ENCODE measurements at regions of chr1 and their contacts with region 1.

Region 1: DNA sequence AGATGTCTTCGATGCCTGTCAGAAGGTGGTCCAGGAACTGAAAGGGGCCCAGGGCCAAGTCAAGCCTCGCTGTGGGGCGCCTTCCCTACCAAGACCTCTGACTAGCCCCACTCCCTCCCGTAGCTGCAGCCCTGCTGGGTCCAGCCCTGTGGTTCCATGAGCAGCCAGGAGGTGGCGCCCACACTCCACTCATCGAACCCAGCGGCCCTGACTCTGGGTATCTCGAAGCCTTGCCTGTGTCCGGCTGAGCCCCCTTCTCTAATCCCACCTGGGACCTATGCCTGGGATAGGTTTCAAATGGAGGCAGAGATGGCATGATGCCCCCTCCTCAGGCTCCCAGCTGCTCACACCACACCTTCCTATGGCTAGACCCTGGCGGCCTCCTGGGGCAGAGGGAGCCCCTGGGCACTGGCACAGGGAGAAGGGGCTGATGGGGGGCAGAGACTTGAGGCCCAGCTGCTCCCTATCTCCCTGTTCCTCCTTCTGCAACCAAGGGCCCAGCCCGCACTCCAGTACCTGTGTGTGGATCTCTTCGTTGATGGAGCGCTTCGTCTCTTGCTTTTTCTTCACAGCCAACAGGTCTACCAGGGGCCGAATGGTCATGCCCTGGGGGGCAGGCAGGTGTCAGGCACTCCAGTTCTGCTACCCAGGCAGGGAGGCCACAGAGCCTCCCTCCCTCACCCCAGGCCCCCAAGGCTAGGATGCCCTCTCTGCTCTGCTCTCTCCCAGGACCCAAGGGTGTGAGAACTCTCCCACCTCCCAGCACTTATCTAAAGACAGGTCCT is 52.0 kb downstream of the SLC9A1 start:
- DNase-seq: peak; percentile 72 to 82 (median 77)
- ATAC-seq: peak; percentile 80 to 91 (median 85)
- H3K4me3 ChIP-seq: no peak overlapping the region
- H3K27ac ChIP-seq: no peak overlapping the region
- H3K4me1 ChIP-seq: peaks cover 0 to 6% (median 0%) of the 10 kb centered on the region in 4 donors
- H3K27me3 ChIP-seq: no peaks in the 10 kb centered on the region
- CTCF ChIP-seq: peak; percentile 96 to 97 (median 96)
- POLR2A ChIP-seq: no peak

Region 2: DNA sequence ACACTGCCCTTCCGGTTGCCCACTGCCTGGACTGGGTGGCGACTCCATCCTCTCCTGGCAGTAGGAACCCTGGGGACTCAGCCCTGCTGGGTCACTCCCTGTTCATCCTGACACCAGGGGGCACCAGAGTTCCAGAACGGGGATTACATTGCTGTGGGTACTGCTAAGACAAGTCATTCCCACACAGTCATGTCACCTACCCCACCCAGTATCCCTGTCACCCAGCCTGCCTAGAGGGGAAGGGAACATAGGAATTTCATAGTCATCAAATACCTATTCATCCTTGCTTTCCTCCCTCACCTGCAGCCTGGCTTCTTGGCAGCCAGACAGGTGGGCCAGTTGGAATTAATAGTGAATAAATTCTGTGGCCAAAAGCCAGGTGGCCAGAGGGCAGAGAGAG is 249.7 kb before region 1 on chr1:
- intact Hi-C with region 1: no loop called
- DNase-seq: peak; percentile 84 to 90 (median 86)
- ATAC-seq: peak; percentile 69 to 90 (median 87)
- H3K4me3 ChIP-seq: no peak overlapping the region
- H3K27ac ChIP-seq: no peak overlapping the region
- H3K4me1 ChIP-seq: peaks cover 0 to 14% (median 0%) of the 10 kb centered on the region in 4 donors
- H3K27me3 ChIP-seq: no peaks in the 10 kb centered on the region
- CTCF ChIP-seq: peak; percentile 81 to 90 (median 86)
- POLR2A ChIP-seq: no peak

Region 3: DNA sequence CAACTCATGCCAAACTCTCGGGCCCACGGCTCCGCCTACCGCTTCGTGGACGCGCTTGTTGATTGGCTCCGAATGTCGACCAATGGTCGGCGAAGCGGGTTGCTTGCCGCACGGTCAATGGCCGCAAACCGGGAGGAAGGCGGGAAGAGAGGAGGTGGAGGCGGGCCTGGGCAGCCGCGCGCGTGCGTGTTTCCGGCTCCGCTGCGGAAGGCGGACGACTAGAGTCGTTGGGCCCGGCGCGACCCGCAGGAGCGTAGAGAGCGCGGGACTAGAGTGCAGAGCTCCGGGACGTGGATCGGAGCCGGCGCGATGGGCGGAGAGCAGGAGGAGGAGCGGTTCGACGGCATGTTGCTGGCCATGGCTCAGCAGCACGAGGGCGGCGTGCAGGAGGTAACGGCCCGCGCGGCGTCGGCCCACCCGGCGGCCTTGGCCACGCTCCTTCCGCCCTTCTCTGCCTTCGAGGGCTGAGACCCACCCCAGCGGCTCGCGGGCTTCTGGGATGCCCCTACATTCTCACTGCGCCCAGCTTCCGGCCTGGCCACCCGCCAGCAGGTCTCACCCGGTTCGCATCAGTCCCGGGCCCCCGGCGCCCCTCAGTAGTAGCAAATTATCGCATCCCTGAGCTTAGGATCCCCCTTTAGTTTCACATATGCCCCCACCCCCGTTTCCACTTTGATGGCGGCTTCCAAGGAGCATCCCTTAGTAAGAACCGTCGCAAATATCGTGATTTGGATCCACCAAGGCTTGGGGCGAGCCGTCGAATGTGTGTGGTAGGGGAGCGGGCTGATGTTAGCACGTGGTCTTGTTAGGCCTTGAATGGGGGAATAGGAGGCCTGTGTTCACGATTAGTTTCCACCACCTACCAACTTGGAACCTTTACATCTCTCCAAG is 181.1 kb before region 1 on chr1 and contains the start of gene NUDC:
- intact Hi-C with region 1: no loop called
- DNase-seq: peak; percentile 98 to 99 (median 99)
- ATAC-seq: peak; percentile 96 to 99 (median 98)
- H3K4me3 ChIP-seq: peak within 1 kb of the TSS; percentile 87 to 99 (median 94)
- H3K27ac ChIP-seq: peak within 1 kb of the TSS; percentile 94
- H3K4me1 ChIP-seq: peaks cover 0 to 22% (median 5%) of the 10 kb centered on the region in 4 donors
- H3K27me3 ChIP-seq: no peaks in the 10 kb centered on the region
- CTCF ChIP-seq: no peak
- POLR2A ChIP-seq: peak; percentile 92
- total RNA-seq, gene NUDC: 40.9 to 60.8 (median 48.4) TPM

Region 4: GRCh38 chr1:27154991-27155781 is 52.3 kb after region 1 on chr1 and contains the start of gene SLC9A1:
- intact Hi-C with region 1: loop called in 1 of 2 experiments (anchors 10 kb)
- DNase-seq: peak; percentile 95
- ATAC-seq: peak; percentile 95 to 98 (median 96)
- H3K4me3 ChIP-seq: peak within 1 kb of the TSS; percentile 63 to 80 (median 72)
- H3K27ac ChIP-seq: peak within 1 kb of the TSS; percentile 56 to 83 (median 82)
- H3K4me1 ChIP-seq: peaks cover 0 to 28% (median 2%) of the 10 kb centered on the region in 4 donors
- H3K27me3 ChIP-seq: no peaks in the 10 kb centered on the region
- CTCF ChIP-seq: peak; percentile 58 to 89 (median 84)
- POLR2A ChIP-seq: peak; percentile 99
- total RNA-seq, gene SLC9A1: 1.7 to 4.3 (median 3.0) TPM

Region 5: GRCh38 chr1:27166351-27166802 is 63.5 kb after region 1 on chr1:
- intact Hi-C with region 1: no loop called
- DNase-seq: no peak
- ATAC-seq: no peak
- H3K4me3 ChIP-seq: no peak overlapping the region
- H3K27ac ChIP-seq: no peak overlapping the region
- H3K4me1 ChIP-seq: no peaks in the 10 kb centered on the region
- H3K27me3 ChIP-seq: no peaks in the 10 kb centered on the region
- CTCF ChIP-seq: no peak
- POLR2A ChIP-seq: no peak

Region 6: GRCh38 chr1:27192039-27192529 is 89.2 kb after region 1 on chr1:
- intact Hi-C with region 1: loop called in 1 of 2 experiments (anchors 10 kb)
- DNase-seq: peak; percentile 63 to 67 (median 64)
- ATAC-seq: peak; percentile 94 to 98 (median 96)
- H3K4me3 ChIP-seq: no peak overlapping the region
- H3K27ac ChIP-seq: peak overlapping the region in 1 of 3 donors; percentile 44
- H3K4me1 ChIP-seq: peaks cover 0 to 10% (median 0%) of the 10 kb centered on the region in 4 donors
- H3K27me3 ChIP-seq: no peaks in the 10 kb centered on the region
- CTCF ChIP-seq: no peak
- POLR2A ChIP-seq: no peak

Region 7: DNA sequence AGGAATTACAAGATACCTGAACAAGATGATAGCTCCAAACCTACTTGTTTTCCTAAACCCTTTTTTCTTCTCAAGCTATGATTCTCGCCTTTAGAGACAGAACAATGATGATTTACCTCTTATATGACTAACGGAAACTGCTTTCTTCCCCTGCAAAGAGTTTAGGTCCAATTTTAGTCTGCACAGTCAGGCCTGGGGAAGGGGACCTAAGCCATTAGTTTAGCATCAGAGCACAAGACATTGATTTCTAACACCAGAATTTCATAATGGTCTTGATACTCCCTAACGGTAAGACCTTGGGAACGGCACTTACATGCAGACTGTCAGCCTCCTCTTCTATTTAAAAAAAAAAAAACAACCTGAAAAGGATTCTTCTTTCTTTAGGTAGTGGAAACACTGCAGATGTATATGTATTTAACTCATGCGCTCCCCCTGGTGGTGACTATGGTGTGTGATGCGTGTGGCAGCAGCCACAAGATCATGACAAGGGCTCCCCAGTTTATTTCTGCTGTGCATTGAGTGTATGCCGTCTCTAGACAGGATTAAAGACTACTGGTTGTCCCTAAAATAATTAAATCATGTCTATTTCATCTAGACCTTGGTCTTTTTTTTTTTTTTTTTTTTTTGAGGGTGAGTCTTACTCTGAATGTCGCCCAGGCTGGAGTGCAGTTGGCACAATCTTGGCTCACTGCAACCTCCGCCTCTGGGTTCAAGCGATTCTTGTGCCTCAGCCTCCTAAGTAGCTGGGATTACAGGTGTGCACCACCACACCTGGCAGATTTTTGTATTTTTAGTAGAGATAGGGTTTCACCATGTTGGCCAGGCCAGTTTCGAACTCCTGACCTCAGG is 181.8 kb after region 1 on chr1:
- intact Hi-C with region 1: loop called (anchors 5 kb)
- DNase-seq: peak; percentile 75 to 82 (median 79)
- ATAC-seq: peak; percentile 92 to 97 (median 94)
- H3K4me3 ChIP-seq: no peak overlapping the region
- H3K27ac ChIP-seq: no peak overlapping the region
- H3K4me1 ChIP-seq: no peaks in the 10 kb centered on the region
- H3K27me3 ChIP-seq: no peaks in the 10 kb centered on the region
- CTCF ChIP-seq: peak; percentile 72 to 89 (median 82)
- POLR2A ChIP-seq: no peak

Measured in right lobe of liver (tissue), 6 donors.